Heart right ventricle (tissue), 16 donors: ENCODE measurements at regions of chr11 and their contacts with region 1.

Region 1: GRCh38 chr11:45110562-45110961 is 35.9 kb upstream of the PRDM11 start:
- DNase-seq: peak in 1 of 2 donors; percentile 64
- ATAC-seq: peak; percentile 45 to 82 (median 66)
- H3K4me3 ChIP-seq: no peak overlapping the region
- H3K27ac ChIP-seq: no peak overlapping the region
- H3K4me1 ChIP-seq: peaks cover 0 to 5% (median 0%) of the 10 kb centered on the region in 9 donors
- H3K27me3 ChIP-seq: peaks cover 0 to 32% (median 13%) of the 10 kb centered on the region in 7 donors
- CTCF ChIP-seq: peak; percentile 75 to 88 (median 83)

Region 2: DNA sequence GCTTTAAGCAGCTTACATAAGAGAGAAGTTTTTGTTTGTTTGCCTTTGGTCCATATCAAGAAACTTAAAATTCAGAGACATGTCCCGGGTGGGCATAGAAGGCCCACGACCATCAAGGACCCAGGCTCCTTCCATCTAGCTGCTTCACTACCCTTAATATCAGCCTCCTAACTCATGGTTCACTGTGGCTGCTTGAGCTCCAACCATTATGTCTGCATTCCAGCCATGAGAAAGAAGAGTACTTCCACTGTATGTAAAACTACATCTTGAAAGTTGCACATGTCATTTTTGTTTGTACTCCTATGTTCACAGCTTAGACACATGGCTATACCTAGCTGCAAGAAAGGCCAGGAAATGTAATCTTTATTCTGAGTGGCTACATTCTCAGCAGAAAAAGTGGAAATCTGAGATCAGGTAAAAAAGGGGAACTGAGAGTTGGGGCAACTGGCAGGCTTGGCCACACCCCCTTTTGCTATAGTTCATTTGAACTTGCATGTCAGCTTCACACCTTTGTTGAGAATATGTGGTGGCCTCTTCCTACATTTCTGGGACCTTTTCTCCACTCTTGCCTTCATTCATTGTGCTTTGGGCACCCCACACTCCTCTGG is 78.5 kb before region 1 on chr11:
- intact Hi-C with region 1: no loop called
- DNase-seq: no peak
- ATAC-seq: no peak
- H3K4me3 ChIP-seq: no peak overlapping the region
- H3K27ac ChIP-seq: no peak overlapping the region
- H3K4me1 ChIP-seq: peaks cover 0 to 34% (median 11%) of the 10 kb centered on the region in 9 donors
- H3K27me3 ChIP-seq: no peaks in the 10 kb centered on the region
- CTCF ChIP-seq: no peak

Region 3: GRCh38 chr11:45233121-45233803 is 122.7 kb after region 1 on chr11:
- intact Hi-C with region 1: loop called in 2 of 10 experiments (anchors 5 kb)
- DNase-seq: peak; percentile 66 to 71
- ATAC-seq: peak; percentile 46 to 81 (median 74)
- H3K4me3 ChIP-seq: no peak overlapping the region
- H3K27ac ChIP-seq: no peak overlapping the region
- H3K4me1 ChIP-seq: peaks cover 0 to 3% (median 0%) of the 10 kb centered on the region in 9 donors
- H3K27me3 ChIP-seq: peaks cover 0 to 7% (median 0%) of the 10 kb centered on the region in 7 donors
- CTCF ChIP-seq: peak; percentile 79 to 87 (median 84)

Region 4: GRCh38 chr11:45294499-45294898 is 183.9 kb after region 1 on chr11:
- intact Hi-C with region 1: loop called (anchors 1 to 5 kb)
- DNase-seq: no peak
- ATAC-seq: peak in 1 of 8 donors; percentile 57
- H3K4me3 ChIP-seq: no peak overlapping the region
- H3K27ac ChIP-seq: no peak overlapping the region
- H3K4me1 ChIP-seq: no peaks in the 10 kb centered on the region
- H3K27me3 ChIP-seq: peaks cover 0 to 40% (median 22%) of the 10 kb centered on the region in 7 donors
- CTCF ChIP-seq: no peak